ENCODE measurements at regions of chr21 and their contacts with region 1.

Region 1: DNA sequence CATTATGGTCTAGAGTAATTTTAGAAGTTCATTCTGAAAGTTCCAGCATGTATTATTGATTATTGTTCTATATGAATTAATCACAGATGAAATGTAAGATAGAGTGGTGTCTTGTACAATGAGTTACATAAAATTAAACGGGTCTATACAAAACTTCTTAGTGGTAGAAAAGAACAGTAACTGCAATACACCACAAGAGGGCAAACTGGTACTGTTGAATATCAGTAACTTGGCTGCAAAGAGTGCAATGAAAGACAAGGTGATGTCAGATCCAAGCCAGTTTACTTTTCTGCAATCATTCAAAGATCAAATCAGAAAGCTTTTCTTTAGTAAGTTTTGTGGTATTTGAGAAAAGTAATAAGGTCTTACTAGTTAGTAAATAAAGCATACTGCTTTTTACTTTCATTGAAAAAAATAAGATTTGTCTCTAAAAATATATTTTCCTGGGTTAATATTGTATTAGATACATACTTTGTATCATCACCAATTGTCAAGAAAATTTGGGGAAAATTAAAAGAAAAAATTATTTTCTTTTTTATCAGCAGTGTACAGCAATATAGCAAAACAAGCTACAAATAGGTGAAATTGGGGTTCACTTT is 66.4 kb upstream of the BTG3 start:
- DNase-seq: no peak
- ATAC-seq: peak; percentile 81
- H3K4me3 Mint-ChIP-seq: no peak overlapping the region
- H3K27ac Mint-ChIP-seq: no peak overlapping the region
- H3K4me1 Mint-ChIP-seq: no peaks in the 10 kb centered on the region
- H3K27me3 Mint-ChIP-seq: no peaks in the 10 kb centered on the region
- CTCF ChIP-seq: peak; percentile 44

Region 2: DNA sequence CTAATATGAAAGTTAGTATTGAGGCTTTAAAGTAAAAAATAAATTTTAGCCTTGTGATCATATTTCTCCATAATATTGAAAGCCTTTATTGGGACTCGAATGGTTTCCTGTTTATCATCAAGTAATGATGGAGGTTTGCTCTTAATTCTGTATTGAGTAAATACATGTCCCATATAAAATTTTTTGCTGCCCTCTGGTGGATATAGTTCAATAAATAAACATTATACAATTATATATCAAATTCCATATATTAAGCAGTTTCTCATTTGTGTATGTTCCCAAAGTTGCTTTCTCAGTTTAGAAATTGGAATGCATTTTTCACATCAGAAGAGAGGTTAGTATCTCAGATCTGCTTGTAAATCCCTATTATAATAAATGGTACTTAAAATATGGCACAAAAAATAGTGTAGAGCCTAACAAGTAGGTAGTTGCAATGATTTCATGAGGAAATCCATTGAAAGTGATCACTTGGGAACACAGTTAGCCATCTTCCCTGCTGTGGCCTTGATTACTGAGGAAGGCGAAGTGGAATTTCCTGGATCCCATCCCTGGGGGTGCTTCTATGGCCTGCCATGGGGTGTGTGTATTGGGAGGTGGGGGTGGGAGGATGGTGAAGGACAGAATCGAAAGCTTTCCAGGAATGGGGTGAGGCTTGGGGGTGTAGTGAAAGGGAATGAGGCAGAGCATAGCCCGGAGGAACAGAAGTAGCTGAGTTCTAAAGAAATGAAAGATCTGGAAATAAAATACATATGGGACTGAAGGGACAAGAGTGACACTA is 224.1 kb after region 1 on chr21:
- CTCF ChIA-PET with region 1: interaction called, 26 read pairs
- POLR2A ChIA-PET with region 1: interaction called, 4 read pairs
- intact Hi-C with region 1: loop called (anchors 1 kb)
- DNase-seq: no peak
- ATAC-seq: peak; percentile 37
- H3K4me3 Mint-ChIP-seq: no peak overlapping the region
- H3K27ac Mint-ChIP-seq: no peak overlapping the region
- H3K4me1 Mint-ChIP-seq: peaks cover 6% of the 10 kb centered on the region
- H3K27me3 Mint-ChIP-seq: no peaks in the 10 kb centered on the region
- CTCF ChIP-seq: no peak